H1 (cell line): ENCODE measurements at regions of chr3 and their contacts with region 1.

Region 1: GRCh38 chr3:104273046-104273649 is 1093.6 kb upstream of the ALCAM start:
- DNase-seq: no peak
- H3K4me3 ChIP-seq: no peak overlapping the region
- H3K27ac ChIP-seq: no peak overlapping the region
- H3K4me1 ChIP-seq: no peaks in the 10 kb centered on the region
- H3K27me3 ChIP-seq: no peaks in the 10 kb centered on the region
- CTCF ChIP-seq: peak in 2 of 3 experiments; percentile 45 to 69; a peak in 2 of 4 replicates
- EP300 ChIP-seq: no peak
- POLR2A ChIP-seq: no peak
- RAD21 ChIP-seq: peak; percentile 83 to 86

Region 2: GRCh38 chr3:104245261-104245660 is 27.9 kb before region 1 on chr3:
- CTCF ChIA-PET with region 1: interaction called, 17 read pairs
- POLR2A ChIA-PET with region 1: no interaction called
- DNase-seq: no peak
- H3K4me3 ChIP-seq: no peak overlapping the region
- H3K27ac ChIP-seq: no peak overlapping the region
- H3K4me1 ChIP-seq: no peaks in the 10 kb centered on the region
- H3K27me3 ChIP-seq: no peaks in the 10 kb centered on the region
- CTCF ChIP-seq: no peak
- EP300 ChIP-seq: no peak
- POLR2A ChIP-seq: no peak
- RAD21 ChIP-seq: no peak

Region 3: GRCh38 chr3:104286645-104287044 is 13.5 kb after region 1 on chr3:
- CTCF ChIA-PET with region 1: interaction called, 34 read pairs
- POLR2A ChIA-PET with region 1: no interaction called
- DNase-seq: no peak
- H3K4me3 ChIP-seq: no peak overlapping the region
- H3K27ac ChIP-seq: no peak overlapping the region
- H3K4me1 ChIP-seq: no peaks in the 10 kb centered on the region
- H3K27me3 ChIP-seq: no peaks in the 10 kb centered on the region
- CTCF ChIP-seq: no peak
- EP300 ChIP-seq: no peak
- POLR2A ChIP-seq: no peak
- RAD21 ChIP-seq: no peak

Region 4: DNA sequence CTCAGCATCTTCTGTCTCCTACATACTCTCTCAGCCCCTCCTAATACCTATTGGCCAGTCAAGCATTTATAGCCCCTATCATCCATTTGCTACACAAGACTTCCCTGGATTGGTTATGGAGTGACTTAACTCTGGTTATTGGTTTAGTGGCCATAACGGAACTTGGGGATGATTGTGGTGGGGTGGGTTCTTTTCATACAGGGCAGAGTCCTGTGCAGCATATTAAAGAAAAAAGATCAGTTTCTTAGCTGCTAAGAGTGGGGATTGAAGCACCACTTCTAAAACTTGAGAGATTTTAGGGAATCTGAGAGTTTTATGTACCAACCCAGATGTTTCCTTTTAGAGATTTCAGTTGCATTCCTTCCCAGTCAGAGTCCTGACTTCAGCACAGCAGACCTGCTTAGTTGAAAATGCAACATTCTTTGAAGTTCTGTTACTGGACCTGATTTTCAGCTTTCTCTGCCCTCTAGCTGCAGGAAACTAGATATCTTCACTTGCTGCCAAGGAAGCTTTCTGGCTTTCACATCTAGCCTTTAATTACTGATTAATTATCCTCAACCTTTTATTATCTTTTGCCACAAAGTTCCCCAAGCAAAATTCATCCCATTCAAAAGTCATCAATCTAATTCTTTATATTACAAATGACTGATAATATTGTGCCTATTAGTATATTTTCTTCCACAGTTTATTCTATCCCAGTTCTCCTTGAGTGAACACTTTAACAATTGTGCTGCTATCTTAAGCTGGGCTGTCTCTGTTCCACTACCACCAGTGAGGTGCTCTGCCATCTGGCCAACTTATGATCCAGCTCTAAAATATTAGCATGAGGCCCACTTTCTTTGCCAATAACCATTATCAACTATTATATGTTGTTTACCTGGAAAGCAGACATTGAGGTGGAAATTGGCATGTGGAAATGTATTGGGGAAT is 187.6 kb after region 1 on chr3:
- CTCF ChIA-PET with region 1: interaction called, 16 read pairs
- POLR2A ChIA-PET with region 1: no interaction called
- DNase-seq: peak in 1 of 2 experiments; percentile 13
- H3K4me3 ChIP-seq: no peak overlapping the region
- H3K27ac ChIP-seq: no peak overlapping the region
- H3K4me1 ChIP-seq: peaks cover 0 to 7% (median 0%) of the 10 kb centered on the region in 4 experiments; a peak in 4 of 7 replicates
- H3K27me3 ChIP-seq: no peaks in the 10 kb centered on the region
- CTCF ChIP-seq: peak in 2 of 3 experiments; percentile 50 to 72; a peak in 2 of 4 replicates
- EP300 ChIP-seq: peak in 1 of 2 experiments; percentile 49; a peak in 1 of 3 replicates
- POLR2A ChIP-seq: no peak
- RAD21 ChIP-seq: peak; percentile 67 to 77